CD8-positive, alpha-beta T cell (primary cell): ENCODE measurements at regions of chr14 and their contacts with region 1.

Region 1: DNA sequence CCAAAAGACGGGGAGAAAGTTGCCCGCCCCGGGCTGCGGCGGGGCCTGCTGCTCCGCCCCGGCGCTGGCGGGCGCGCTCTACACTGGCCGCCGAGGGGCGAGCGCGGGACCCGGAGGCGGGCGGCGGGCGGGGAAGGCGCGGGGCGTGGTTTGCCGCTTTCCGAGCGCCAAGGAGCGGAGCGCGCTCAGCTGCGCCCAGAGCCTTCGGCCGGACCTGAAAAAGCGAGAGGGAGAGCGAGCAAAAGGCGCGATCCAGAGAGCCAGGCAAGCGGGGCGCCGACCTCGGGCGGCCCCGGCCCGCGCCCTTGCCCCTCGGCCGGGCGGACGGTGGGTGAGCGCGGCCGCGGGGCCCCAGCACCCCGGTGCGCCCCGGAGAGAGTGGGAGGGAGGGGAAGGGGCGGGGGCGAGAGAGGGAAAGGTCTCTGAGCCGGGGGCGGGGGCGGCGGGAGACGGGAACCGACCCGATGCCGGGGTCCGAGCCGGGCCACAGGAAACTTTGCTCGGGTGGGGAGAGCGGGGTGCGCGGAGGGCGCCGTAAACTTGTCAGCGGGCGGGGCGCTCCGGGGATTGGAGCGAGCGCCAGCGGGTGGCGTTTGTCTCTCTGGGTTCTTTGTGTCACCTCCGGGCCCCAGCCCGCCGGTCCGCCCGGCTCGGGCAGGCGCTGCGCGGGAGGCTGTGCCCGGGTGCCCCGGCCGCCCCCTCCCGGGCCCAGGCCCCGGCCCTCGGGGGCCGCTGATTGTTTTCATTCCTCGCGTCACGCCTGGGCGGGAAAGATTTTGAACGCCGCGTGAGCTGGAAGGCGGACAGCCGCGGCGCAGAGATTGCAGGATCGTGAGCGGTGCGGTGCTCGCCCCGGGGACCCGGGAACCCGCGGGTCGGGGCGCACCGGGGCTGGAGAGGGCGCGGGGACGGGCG is at the start of gene SYNE2:
- DNase-seq: peak; percentile 63 to 89 (median 83)
- ATAC-seq: peak; percentile 81
- H3K4me3 ChIP-seq: peak within 1 kb of the TSS; percentile 67 to 79
- H3K4me3 Mint-ChIP-seq: peak within 1 kb of the TSS; percentile 93
- H3K27ac ChIP-seq: peak within 1 kb of the TSS; percentile 69 to 72
- H3K27ac Mint-ChIP-seq: peak within 1 kb of the TSS; percentile 96
- H3K4me1 ChIP-seq: peaks cover 41% of the 10 kb centered on the region
- H3K4me1 Mint-ChIP-seq: peaks cover 44% of the 10 kb centered on the region
- H3K27me3 ChIP-seq: no peaks in the 10 kb centered on the region
- H3K27me3 Mint-ChIP-seq: no peaks in the 10 kb centered on the region
- CTCF ChIP-seq: peak; percentile 19
- total RNA-seq, gene SYNE2: 93.4 to 94.2 TPM

Region 2: DNA sequence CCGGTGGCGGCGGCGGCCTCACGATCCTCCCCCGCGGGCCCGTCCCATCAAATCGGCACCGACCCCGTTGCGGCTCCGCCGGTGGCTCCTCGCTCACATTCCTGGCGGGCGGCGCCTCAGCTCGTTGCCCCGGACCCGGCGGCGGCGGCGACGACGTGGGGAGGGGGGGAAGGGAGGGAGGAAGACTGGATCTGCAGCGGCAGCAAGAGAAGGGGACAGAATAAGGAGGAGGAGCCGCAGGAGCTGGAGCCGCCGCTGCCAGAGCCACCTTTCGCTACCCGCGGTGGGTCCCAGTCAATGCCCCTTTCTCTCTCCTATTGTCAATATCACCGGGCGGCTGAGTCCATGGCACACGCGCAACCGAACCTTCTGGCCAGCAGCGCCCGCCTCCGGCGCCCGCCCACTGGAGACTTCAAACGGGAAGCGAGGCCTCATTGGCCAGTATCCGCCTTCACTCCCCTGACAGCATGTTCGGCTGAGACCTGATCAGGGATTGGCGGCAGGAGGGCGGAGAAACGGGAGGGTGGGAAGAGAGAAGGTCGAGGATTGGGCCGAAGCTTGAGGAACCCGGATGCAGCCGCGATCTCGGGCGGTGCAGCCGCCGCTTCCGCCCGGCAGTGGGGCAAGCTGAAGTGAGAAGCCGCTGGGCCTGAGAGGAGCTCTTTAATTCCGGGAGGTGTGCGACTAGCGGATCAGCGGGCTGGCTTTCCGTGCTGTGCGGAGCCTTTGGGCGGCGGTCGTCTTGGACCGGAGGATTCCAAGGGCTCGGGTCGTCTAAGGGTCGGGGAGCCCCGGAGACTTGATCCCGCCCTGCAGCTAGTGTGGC is 309.9 kb before region 1 on chr14 and contains the start of gene PPP2R5E:
- CTCF ChIA-PET with region 1: no interaction called
- POLR2A ChIA-PET with region 1: interaction called, 3 read pairs
- intact Hi-C with region 1: loop called (anchors 5 to 10 kb)
- DNase-seq: peak; percentile 95 to 99 (median 97)
- ATAC-seq: peak; percentile 96
- H3K4me3 ChIP-seq: peak within 1 kb of the TSS; percentile 75 to 98
- H3K4me3 Mint-ChIP-seq: peak within 1 kb of the TSS; percentile 98
- H3K27ac ChIP-seq: peak within 1 kb of the TSS; percentile 71 to 91
- H3K27ac Mint-ChIP-seq: peak within 1 kb of the TSS; percentile 93
- H3K4me1 ChIP-seq: peaks cover 17% of the 10 kb centered on the region
- H3K4me1 Mint-ChIP-seq: peaks cover 33% of the 10 kb centered on the region
- H3K27me3 ChIP-seq: no peaks in the 10 kb centered on the region
- H3K27me3 Mint-ChIP-seq: no peaks in the 10 kb centered on the region
- CTCF ChIP-seq: no peak
- total RNA-seq, gene PPP2R5E: 33.5 to 35.9 TPM

Region 3: DNA sequence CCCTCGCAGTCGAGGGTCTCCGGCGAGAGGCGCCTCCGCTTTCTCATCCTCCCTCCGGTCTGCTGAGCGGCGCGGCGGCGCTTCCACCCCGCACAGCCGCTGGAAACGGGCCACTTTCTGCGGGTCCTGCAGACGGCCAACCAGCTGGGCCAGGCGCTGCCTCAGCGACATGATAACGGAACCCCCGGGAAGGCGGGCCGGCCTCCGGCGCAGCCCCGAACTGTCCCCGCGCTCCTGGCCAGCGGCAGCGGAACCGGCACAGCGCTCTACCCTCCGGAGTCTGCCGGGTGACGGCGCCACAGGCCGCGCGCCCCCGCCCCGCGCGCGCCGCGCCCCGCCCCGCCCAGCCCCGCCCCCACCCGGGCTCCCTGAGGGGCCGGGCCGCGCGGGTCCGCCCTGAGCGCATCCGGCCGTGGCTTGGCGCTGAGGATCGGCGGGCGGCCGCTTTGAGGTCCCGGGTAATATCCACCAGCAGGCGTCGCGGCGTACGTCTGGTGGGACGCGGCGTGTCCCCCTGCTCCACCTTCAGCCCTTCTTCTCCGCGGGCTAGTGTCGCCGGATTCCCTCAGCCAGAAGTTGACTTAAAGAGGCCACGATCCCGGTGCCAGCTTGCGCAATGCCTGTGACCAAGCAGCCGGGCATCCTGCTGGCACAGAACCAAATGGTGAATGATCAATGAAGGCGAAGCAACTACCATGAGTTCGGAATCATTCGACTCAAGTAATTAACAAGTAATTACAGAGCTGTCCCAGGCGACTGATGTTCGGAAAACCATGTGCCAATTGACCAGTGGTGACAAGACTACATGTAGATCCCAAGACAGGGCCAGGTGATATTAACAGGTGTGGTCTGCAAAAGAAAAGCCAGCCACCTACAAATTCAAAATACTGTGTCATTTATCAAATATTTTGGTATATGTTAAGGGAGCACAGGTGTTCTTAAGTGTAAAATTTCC is 125.0 kb before region 1 on chr14 and contains the start of gene SGPP1:
- CTCF ChIA-PET with region 1: no interaction called
- POLR2A ChIA-PET with region 1: no interaction called
- intact Hi-C with region 1: loop called in 1 of 2 experiments (anchors 2 kb)
- DNase-seq: peak; percentile 62 to 92 (median 78)
- ATAC-seq: peak; percentile 90
- H3K4me3 ChIP-seq: peak within 1 kb of the TSS; percentile 83 to 88
- H3K4me3 Mint-ChIP-seq: peak within 1 kb of the TSS; percentile 98
- H3K27ac ChIP-seq: peak within 1 kb of the TSS; percentile 72 to 82
- H3K27ac Mint-ChIP-seq: peak within 1 kb of the TSS; percentile 94
- H3K4me1 ChIP-seq: peaks cover 31% of the 10 kb centered on the region
- H3K4me1 Mint-ChIP-seq: peaks cover 44% of the 10 kb centered on the region
- H3K27me3 ChIP-seq: no peaks in the 10 kb centered on the region
- H3K27me3 Mint-ChIP-seq: no peaks in the 10 kb centered on the region
- CTCF ChIP-seq: no peak
- total RNA-seq, gene SGPP1: 15.9 to 16.5 TPM

Region 4: GRCh38 chr14:63788011-63788933 is 64.8 kb before region 1 on chr14:
- CTCF ChIA-PET with region 1: no interaction called
- POLR2A ChIA-PET with region 1: no interaction called
- intact Hi-C with region 1: no loop called
- DNase-seq: no peak
- ATAC-seq: no peak
- H3K4me3 ChIP-seq: no peak overlapping the region
- H3K4me3 Mint-ChIP-seq: no peak overlapping the region
- H3K27ac ChIP-seq: no peak overlapping the region
- H3K27ac Mint-ChIP-seq: no peak overlapping the region
- H3K4me1 ChIP-seq: no peaks in the 10 kb centered on the region
- H3K4me1 Mint-ChIP-seq: no peaks in the 10 kb centered on the region
- H3K27me3 ChIP-seq: no peaks in the 10 kb centered on the region
- H3K27me3 Mint-ChIP-seq: peaks cover 3% of the 10 kb centered on the region
- CTCF ChIP-seq: no peak

Region 5: DNA sequence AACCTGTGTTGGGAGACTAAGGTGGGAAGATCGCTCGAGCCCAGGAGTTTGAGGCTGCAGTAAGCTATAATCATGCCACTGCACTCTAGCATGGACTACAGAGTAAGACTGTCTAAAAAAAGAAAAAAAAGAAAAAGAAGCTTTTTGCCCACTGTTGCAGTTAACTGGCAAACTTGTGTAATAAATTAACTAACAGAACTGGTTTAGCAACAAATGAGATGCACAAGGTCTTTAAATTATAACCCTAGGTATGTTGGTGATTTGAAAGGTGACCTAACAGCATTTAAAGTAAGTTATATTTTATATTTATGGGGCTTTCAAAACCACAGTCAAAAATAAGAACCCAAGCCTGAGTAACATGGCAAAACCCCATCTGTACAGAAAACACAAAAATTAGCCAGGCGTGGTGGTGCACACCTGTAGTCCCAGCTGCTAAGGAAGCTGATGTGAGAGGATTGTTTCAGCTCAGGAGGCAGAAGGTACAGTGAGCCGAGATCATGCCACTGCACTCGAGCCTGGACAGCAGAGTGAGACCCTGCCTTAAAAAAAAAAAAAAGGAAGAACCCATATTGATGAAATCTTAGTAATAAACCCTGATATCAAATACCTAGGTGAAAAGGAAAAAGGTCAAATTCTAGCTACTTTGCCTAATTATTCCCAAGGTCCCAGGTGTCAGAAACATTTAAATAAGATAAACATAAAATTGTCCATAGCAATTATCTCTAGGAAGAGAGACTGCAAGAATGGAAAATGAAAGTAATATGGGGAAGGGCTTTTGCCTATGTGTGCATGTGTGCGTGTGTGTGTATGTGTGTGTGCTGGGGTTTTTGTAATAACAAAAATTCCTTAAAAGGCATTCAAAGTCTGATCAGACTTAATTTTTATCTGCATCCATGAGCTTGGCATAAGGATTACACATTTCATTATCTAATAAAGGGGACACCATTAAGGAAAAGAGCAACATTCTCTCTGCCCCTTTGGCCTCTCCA is 15.2 kb after region 1 on chr14:
- CTCF ChIA-PET with region 1: interaction called, 24 read pairs
- POLR2A ChIA-PET with region 1: interaction called, 24 read pairs
- intact Hi-C with region 1: loop called (anchors 1 kb)
- DNase-seq: peak in 3 of 9 experiments; percentile 34 to 69 (median 50)
- ATAC-seq: no peak
- H3K4me3 ChIP-seq: no peak overlapping the region
- H3K4me3 Mint-ChIP-seq: peak overlapping the region; percentile 52
- H3K27ac ChIP-seq: peak overlapping the region; percentile 21 to 31
- H3K27ac Mint-ChIP-seq: peak overlapping the region; percentile 76
- H3K4me1 ChIP-seq: peaks cover 46% of the 10 kb centered on the region
- H3K4me1 Mint-ChIP-seq: peaks cover 63% of the 10 kb centered on the region
- H3K27me3 ChIP-seq: no peaks in the 10 kb centered on the region
- H3K27me3 Mint-ChIP-seq: no peaks in the 10 kb centered on the region
- CTCF ChIP-seq: no peak

Region 6: DNA sequence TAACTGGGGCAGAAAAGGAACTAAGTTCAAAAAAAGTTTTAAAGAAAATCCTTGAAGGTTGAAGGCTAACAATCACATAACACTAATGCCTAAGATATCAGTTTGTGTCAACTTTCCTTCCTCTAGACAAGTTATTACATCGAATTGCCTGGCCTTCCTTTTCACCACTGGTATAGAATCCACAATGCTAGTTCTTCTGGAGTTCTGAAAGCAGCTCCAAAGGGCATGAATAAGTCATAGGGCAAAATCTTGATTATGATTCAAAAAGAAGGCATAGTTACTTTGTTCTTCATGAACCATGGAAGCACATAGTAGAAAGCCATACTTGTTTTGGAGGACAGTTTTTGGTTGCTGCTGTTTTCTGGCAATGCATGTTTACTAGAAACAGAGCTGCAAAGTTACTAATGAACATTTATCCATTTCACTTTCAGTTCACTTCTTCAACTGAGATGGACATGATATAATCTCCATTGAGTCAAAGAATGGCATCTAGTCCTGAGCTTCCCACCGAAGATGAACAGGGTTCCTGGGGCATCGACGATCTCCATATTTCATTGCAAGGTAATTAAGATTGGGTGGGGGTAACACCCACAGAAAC is 55.7 kb after region 1 on chr14:
- CTCF ChIA-PET with region 1: no interaction called
- POLR2A ChIA-PET with region 1: no interaction called
- intact Hi-C with region 1: loop called in 1 of 2 experiments (anchors 5 kb)
- DNase-seq: no peak
- ATAC-seq: no peak
- H3K4me3 ChIP-seq: no peak overlapping the region
- H3K4me3 Mint-ChIP-seq: peak overlapping the region; percentile 67
- H3K27ac ChIP-seq: no peak overlapping the region
- H3K27ac Mint-ChIP-seq: no peak overlapping the region
- H3K4me1 ChIP-seq: peaks cover 4% of the 10 kb centered on the region
- H3K4me1 Mint-ChIP-seq: peaks cover 57% of the 10 kb centered on the region
- H3K27me3 ChIP-seq: no peaks in the 10 kb centered on the region
- H3K27me3 Mint-ChIP-seq: no peaks in the 10 kb centered on the region
- CTCF ChIP-seq: no peak

Region 7: DNA sequence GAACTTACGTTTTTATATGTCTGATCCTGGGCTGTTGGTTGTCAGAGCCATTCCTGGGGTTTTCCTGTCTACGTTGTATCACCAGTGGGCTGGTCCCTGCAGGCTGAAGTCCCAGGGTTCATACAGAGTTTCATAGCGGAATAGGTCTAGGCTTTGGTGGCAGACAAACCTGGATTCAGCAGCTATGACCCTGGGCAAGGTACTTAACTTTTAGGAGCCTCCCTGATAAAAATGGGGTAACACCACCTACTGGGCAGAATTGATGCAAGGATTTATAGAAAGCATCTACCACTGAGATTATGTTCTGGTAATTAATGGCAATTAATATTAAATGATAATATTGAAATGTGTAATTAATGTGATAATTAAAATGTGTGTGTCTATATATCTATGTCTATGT is 140.9 kb after region 1 on chr14:
- CTCF ChIA-PET with region 1: interaction called, 3 read pairs
- POLR2A ChIA-PET with region 1: interaction called, 3 read pairs
- intact Hi-C with region 1: loop called (anchors 5 kb)
- DNase-seq: peak in 3 of 9 experiments; percentile 6 to 34 (median 19)
- ATAC-seq: no peak
- H3K4me3 ChIP-seq: no peak overlapping the region
- H3K4me3 Mint-ChIP-seq: no peak overlapping the region
- H3K27ac ChIP-seq: no peak overlapping the region
- H3K27ac Mint-ChIP-seq: no peak overlapping the region
- H3K4me1 ChIP-seq: no peaks in the 10 kb centered on the region
- H3K4me1 Mint-ChIP-seq: peaks cover 3% of the 10 kb centered on the region
- H3K27me3 ChIP-seq: no peaks in the 10 kb centered on the region
- H3K27me3 Mint-ChIP-seq: no peaks in the 10 kb centered on the region
- CTCF ChIP-seq: no peak

Region 8: DNA sequence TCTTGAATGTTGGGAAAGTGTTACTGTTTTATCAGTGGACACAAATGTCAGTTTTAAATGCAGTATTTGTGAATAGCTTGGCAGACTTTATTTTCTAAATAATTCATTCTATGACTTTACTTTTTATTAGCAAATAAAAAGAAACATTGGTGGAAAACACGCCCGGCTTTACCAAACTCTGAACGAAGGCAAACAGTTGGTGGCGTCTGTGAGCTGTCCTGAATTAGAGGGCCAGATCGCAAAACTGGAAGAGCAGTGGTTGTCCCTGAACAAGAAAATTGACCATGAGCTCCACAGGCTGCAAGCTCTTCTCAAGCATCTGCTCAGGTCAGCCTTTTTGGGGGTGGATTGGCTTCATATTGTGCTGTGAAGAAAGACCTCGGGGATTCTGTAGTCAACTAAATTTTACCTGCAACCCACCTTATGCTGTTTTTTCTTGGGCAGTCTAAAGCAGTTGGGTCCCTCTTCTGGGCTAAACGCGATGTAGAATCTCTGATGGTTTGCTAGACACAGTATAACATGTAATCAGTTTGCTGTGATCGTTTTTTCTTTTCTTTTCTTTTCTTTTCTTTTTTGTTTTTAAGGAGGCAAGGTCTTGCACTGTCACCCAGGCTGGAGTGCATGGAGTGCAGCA is 284.7 kb after region 1 on chr14:
- CTCF ChIA-PET with region 1: no interaction called
- POLR2A ChIA-PET with region 1: no interaction called
- intact Hi-C with region 1: no loop called
- DNase-seq: no peak
- ATAC-seq: no peak
- H3K4me3 ChIP-seq: no peak overlapping the region
- H3K4me3 Mint-ChIP-seq: no peak overlapping the region
- H3K27ac ChIP-seq: no peak overlapping the region
- H3K27ac Mint-ChIP-seq: no peak overlapping the region
- H3K4me1 ChIP-seq: no peaks in the 10 kb centered on the region
- H3K4me1 Mint-ChIP-seq: no peaks in the 10 kb centered on the region
- H3K27me3 ChIP-seq: no peaks in the 10 kb centered on the region
- H3K27me3 Mint-ChIP-seq: no peaks in the 10 kb centered on the region
- CTCF ChIP-seq: no peak

Region 9: DNA sequence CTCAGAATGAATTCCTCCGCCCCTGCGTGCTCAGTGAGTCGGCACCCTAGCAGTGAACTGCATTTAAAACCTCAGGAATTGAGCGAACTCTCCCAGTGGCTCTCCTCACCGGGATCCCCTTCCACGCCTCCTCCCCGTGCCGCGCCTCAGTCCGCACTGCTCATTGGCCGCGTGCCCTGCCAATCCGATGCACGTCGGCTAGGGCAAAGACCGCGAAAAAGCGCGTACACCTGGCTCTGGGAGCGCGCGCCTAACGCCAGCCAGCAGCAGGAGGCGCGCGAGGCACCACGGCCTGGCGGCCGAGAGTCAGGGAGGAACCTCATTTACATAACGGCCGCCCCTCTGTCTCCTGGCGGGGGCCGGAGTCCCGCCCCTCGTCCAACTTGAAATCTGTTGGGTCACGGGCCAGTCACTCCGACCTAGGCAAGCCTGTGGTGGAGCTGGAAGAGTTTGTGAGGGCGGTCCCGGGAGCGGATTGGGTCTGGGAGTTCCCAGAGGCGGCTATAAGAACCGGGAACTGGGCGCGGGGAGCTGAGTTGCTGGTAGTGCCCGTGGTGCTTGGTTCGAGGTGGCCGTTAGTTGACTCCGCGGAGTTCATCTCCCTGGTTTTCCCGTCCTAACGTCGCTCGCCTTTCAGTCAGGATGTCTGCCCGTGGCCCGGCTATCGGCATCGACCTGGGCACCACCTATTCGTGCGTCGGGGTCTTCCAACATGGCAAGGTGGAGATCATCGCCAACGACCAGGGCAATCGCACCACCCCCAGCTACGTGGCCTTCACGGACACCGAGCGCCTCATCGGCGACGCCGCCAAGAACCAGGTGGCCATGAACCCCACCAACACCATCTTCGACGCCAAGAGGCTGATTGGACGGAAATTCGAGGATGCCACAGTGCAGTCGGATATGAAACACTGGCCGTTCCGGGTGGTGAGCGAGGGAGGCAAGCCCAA is 687.4 kb after region 1 on chr14 and contains the start of gene HSPA2:
- CTCF ChIA-PET with region 1: no interaction called
- POLR2A ChIA-PET with region 1: no interaction called
- intact Hi-C with region 1: loop called in 1 of 2 experiments (anchors 2 kb)
- DNase-seq: peak; percentile 85 to 98 (median 93)
- ATAC-seq: peak; percentile 87
- H3K4me3 ChIP-seq: peak within 1 kb of the TSS; percentile 83 to 90
- H3K4me3 Mint-ChIP-seq: peak within 1 kb of the TSS; percentile 96
- H3K27ac ChIP-seq: peak within 1 kb of the TSS; percentile 42 to 56
- H3K27ac Mint-ChIP-seq: peak within 1 kb of the TSS; percentile 84
- H3K4me1 ChIP-seq: peaks cover 19% of the 10 kb centered on the region
- H3K4me1 Mint-ChIP-seq: peaks cover 26% of the 10 kb centered on the region
- H3K27me3 ChIP-seq: no peaks in the 10 kb centered on the region
- H3K27me3 Mint-ChIP-seq: no peaks in the 10 kb centered on the region
- CTCF ChIP-seq: peak; percentile 63
- total RNA-seq, gene HSPA2: 2.1 to 2.6 TPM